Prostate gland (tissue), 2 donors: ENCODE measurements at regions of chr2 and their contacts with region 1.

Region 1: DNA sequence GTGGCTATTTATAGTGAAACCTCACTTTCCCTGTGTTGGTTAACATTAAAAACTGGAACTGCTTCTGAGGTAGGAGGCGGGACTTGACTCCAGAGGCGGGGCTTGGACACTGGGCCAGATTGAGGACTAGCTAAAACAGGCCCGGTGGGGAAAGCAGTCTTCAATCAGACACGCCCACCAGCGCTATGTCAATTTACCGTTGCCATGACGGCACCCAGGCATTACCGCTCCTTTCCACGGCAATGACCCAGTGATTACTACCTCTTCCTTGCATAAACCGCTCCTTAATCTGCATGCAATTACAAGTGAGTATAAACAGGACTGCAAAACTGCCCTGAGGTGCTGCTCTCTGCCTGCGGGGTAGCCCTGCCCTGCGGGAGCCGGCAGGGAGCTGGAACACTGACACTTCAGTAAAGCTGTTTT is 35.3 kb downstream of the LRRFIP1 start:
- DNase-seq: peak; percentile 98
- H3K4me3 ChIP-seq: no peak overlapping the region
- H3K27ac ChIP-seq: peak overlapping the region; percentile 68 to 71
- H3K4me1 ChIP-seq: peaks cover 20% of the 10 kb centered on the region
- H3K27me3 ChIP-seq: no peaks in the 10 kb centered on the region
- CTCF ChIP-seq: peak in 1 of 4 experiments; percentile 8
- POLR2A ChIP-seq: peak; percentile 30

Region 2: DNA sequence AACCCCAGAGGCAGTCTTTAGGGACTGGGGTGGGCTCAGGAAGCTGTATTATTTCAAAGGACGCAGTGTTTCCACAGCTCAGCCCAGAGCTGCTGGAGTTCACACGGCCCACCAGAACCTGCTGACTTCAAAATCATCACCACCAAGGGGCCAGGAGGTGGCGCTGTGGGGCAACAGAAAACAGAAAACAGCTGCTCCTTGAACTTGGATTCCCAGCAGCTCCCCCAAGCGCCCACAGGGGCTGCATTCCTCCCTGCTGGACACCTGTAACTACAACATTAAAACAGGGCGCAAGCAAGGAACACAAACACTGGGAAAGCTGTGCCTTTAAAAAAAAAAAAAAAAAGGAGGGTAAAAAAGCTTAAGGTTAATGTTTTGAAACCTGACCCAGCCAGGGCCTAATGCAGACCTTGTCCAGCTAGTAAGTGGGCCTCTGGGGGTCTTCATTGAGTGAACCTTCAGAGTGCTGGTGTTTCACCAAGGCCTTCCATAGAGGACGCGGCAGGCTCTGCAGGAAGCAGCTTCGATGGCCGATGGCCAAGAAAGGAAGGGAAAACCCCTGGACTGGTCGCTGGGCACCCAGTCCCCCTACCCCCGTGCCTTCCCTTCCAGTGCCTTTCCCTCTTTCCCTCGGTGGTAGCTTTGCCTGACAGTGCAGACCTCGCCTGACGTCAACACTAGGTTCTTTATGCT is 149.8 kb before region 1 on chr2:
- intact Hi-C with region 1: loop called (anchors 10 kb)
- DNase-seq: peak; percentile 86
- H3K4me3 ChIP-seq: no peak overlapping the region
- H3K27ac ChIP-seq: peak overlapping the region; percentile 71 to 98
- H3K4me1 ChIP-seq: peaks cover 39% of the 10 kb centered on the region
- H3K27me3 ChIP-seq: no peaks in the 10 kb centered on the region
- CTCF ChIP-seq: peak; percentile 77 to 94 (median 93)
- POLR2A ChIP-seq: no peak

Region 3: DNA sequence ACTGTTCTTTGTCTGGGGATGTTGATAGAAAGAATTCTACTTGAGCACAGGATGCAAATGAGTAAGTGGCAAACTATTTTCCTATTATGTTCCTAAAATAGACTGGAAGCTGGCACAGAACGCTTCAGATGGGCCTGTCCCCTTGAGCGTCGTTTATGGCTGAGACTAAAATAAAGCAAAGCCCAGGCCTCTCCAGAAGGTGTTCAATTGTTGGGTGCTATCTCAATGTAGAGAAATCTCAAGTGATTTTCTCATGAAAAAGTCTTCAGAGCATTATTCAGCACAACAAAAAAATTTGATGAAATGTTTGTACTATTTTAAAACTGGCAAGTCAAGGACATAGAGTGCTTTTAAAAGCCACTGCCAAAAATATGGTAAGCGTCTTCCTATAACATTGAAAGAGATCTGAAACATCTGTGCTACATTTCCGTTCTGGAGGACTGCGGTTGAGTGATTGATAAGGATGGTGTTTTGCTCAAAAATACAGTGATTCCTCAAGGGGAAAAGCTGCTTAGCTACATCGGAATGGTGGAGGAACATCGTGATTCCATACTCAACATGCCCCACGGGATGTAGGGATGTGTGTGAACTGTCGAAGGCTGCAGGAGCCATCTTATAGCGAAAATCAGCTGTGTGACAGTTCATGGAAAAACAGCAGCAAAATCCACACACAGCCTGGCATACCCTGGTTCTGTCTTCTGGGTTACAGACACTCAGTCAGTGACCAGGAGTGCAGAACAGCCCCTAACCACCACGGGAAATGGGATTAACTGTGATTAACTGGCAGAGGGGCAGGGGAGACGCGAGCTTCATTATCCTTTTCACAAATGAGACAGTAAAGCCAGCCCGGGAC is 45.7 kb before region 1 on chr2:
- intact Hi-C with region 1: no loop called
- DNase-seq: no peak
- H3K4me3 ChIP-seq: no peak overlapping the region
- H3K27ac ChIP-seq: peak overlapping the region; percentile 66 to 67
- H3K4me1 ChIP-seq: no peaks in the 10 kb centered on the region
- H3K27me3 ChIP-seq: no peaks in the 10 kb centered on the region
- CTCF ChIP-seq: no peak
- POLR2A ChIP-seq: no peak

Region 4: DNA sequence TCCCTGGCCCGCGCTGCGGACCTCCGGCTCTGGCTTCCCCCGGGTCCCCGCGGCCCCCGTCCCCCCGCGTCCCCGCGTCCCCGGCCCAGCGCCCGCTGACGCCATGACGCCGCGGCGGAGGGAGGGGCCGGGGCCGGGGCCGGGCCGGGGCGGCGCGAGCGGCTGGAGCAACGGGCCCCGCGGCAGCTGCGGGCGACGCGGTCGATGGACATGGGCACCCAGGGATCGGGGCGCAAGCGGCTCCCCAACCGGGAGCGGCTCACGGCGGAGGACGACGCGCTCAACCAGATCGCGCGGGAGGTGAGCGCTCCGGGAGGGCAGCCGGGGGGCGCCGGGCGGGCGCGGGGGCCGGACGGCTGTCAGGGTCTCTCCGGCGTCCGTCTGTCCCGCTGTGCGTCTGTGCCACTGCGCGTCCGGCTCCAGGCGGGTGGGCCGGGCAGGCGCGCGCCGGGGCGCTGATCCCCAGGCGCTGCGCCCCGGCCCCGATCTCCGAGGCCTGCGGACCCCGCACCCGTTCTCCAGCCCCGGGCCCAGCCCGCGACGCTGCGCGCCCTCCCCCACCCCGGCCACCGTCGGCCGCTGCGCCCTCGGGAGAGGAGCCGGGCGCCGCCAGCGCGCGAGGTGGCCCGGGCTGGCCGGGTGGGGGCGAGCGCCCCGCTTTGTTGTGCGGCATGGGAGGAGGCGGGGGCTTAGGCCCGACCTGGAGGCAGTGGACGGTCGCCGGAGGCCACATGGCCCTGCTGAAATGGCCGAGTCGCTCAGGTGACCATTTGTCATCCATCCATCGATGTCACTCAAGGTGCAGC is 35.0 kb before region 1 on chr2 and contains the start of gene LRRFIP1:
- intact Hi-C with region 1: loop called (anchors 1 kb)
- DNase-seq: no peak
- H3K4me3 ChIP-seq: peak within 1 kb of the TSS; percentile 66 to 77
- H3K27ac ChIP-seq: peak within 1 kb of the TSS; percentile 65 to 75
- H3K4me1 ChIP-seq: peaks cover 9% of the 10 kb centered on the region
- H3K27me3 ChIP-seq: no peaks in the 10 kb centered on the region
- CTCF ChIP-seq: no peak
- POLR2A ChIP-seq: no peak
- total RNA-seq, gene LRRFIP1: 66.1 to 73.1 TPM

Region 5: GRCh38 chr2:237714690-237715458 is 52.2 kb after region 1 on chr2:
- intact Hi-C with region 1: no loop called
- DNase-seq: peak; percentile 55
- H3K4me3 ChIP-seq: peak overlapping the region in 1 of 2 donors; percentile 1
- H3K27ac ChIP-seq: peak overlapping the region; percentile 56 to 69
- H3K4me1 ChIP-seq: peaks cover 9% of the 10 kb centered on the region
- H3K27me3 ChIP-seq: no peaks in the 10 kb centered on the region
- CTCF ChIP-seq: no peak
- POLR2A ChIP-seq: no peak